ENCODE measurements at regions of chr15 and their contacts with region 1.

Region 1: DNA sequence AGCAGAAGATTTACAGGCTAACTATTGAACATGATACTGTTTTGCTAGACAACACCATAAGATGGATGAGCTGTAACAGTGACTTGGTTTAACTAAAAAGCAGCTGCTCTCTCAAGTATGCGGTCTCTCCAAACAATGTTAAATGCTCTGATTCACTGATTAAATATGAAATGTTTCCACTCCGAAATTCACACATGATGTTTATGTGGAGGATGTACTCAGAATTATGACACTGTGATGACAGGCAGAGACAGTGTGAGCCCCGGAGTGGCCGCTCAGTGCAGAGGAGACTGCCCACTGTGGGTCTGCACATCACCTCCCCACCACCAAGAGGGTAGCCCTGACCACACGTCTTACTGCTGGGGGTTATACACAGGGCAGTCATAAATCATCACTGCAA is 83.9 kb upstream of the MEX3B start:
- DNase-seq: peak in 2 of 3 donors; percentile 24 to 36
- H3K4me3 ChIP-seq: peak overlapping the region in 1 of 7 experiments; percentile 24
- H3K27ac ChIP-seq: no peak overlapping the region
- H3K4me1 ChIP-seq: peaks cover 10 to 35% (median 31%) of the 10 kb centered on the region in 4 experiments
- H3K27me3 ChIP-seq: no peaks in the 10 kb centered on the region

Region 2: DNA sequence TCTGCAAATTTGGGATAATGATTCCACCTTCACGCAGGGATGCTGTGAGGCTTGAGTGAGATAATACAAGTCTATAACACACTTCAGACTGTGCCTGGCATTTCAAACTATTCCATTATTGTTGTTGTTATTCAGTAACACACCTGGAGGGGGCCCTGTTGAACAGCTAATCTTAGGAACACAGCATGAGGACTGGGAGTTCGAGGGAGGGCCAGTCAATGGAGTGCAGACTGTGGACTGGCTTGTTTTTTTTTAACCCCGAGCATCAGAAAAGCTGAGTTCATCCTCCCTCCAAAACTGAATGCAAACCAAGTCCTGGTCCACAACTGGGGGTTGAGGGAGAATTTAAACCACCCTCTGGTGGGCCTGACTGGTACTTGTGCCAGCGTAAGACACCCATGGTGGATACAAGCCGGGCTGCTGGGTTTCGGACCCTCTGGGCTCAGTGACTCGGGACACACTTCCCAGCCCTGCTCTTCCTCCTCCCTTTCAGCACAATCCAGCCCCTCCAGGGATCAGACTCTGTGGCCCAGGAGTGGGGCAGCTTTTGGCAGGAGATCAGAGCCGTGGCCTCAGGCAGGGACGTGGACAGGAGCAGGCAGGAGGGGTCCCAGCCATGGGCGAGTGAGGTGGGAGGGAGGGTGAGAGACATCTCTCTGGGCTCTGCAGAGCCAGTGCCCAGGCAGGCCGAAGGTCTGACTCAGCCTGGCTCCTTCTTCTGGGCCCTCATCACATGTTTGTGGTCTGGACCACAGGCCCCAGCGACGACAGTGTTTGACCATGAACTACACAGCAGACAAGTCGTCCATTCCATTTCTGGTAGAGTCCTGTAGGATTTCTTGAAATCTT is 47.6 kb before region 1 on chr15:
- CTCF ChIA-PET with region 1: no interaction called
- POLR2A ChIA-PET with region 1: no interaction called
- DNase-seq: no peak
- H3K4me3 ChIP-seq: no peak overlapping the region
- H3K27ac ChIP-seq: no peak overlapping the region
- H3K4me1 ChIP-seq: peaks cover 0 to 4% (median 0%) of the 10 kb centered on the region in 4 experiments
- H3K27me3 ChIP-seq: no peaks in the 10 kb centered on the region

Region 3: GRCh38 chr15:82139823-82140268 is 10.1 kb after region 1 on chr15:
- CTCF ChIA-PET with region 1: interaction called, 17 read pairs
- POLR2A ChIA-PET with region 1: no interaction called
- DNase-seq: peak; percentile 42 to 69 (median 67)
- H3K4me3 ChIP-seq: peak overlapping the region in 1 of 7 experiments; percentile 31
- H3K27ac ChIP-seq: peak overlapping the region in 1 of 2 experiments; percentile 44
- H3K4me1 ChIP-seq: peaks cover 2 to 37% (median 25%) of the 10 kb centered on the region in 4 experiments
- H3K27me3 ChIP-seq: no peaks in the 10 kb centered on the region

Region 4: DNA sequence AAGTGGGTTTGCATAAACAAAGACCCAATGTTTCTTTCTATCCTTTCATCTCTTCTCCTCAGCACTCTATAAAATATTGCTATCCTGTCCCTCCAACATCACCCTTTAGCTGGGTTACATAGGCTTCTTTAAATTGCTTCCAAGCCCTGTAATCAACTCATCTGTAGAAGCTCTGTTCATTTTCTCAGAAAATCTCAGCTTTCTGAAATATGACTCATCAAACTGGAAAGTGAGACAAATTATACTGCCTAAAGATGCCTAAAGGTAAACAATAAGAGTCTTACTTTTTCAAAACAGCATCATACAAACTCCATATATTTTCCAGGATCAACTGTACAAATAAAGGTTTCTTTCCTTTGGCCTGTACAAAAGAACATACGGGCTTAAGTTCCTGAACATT is 99.0 kb after region 1 on chr15:
- CTCF ChIA-PET with region 1: no interaction called
- POLR2A ChIA-PET with region 1: no interaction called
- DNase-seq: no peak
- H3K4me3 ChIP-seq: no peak overlapping the region
- H3K27ac ChIP-seq: no peak overlapping the region
- H3K4me1 ChIP-seq: peaks cover 0 to 12% (median 8%) of the 10 kb centered on the region in 4 experiments
- H3K27me3 ChIP-seq: no peaks in the 10 kb centered on the region